Colonic mucosa (tissue), 4 donors: ENCODE measurements at regions of chrX and their contacts with region 1.

Region 1: DNA sequence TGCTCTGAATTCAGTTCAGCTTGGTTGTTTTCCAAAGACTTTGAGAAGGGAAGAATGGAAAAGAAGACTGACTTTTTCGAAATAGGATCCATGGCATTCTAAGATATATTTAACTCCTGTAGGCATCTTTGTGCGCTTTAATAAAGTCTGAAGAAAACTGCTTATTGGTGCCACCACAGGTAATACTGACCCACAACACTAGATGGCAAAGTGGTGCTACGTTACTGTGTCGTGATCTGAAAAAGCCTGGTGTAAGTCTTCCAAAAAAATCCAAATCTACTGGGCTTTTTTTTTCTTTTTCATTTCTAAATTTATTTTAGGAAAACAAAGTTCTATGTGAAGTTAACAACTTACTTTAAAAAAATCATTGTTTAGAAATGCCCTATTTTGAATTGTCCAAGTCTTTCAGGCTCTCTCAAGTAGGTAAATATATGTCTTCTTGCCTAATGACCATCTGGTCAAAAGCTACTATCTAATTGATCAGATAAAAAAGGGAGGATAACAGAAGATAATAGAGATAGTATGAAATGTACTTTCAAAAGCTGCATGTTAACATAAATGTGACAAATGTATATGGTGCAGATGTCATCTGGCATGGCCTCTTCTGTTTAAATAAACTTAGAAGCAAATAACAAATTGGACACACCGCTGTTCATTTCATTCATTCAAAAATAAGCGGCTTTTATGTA is 47.0 kb upstream of the MID1IP1 start:
- DNase-seq: peak; percentile 22
- H3K4me3 ChIP-seq: no peak overlapping the region
- H3K27ac ChIP-seq: no peak overlapping the region
- H3K4me1 ChIP-seq: no peaks in the 10 kb centered on the region
- H3K27me3 ChIP-seq: no peaks in the 10 kb centered on the region
- CTCF ChIP-seq: peak; percentile 46

Region 2: GRCh38 chrX:39242187-39242586 is 487.9 kb after region 1 on chrX:
- intact Hi-C with region 1: loop called (anchors 10 kb)
- DNase-seq: peak; percentile 64
- H3K4me3 ChIP-seq: no peak overlapping the region
- H3K27ac ChIP-seq: no peak overlapping the region
- H3K4me1 ChIP-seq: no peaks in the 10 kb centered on the region
- H3K27me3 ChIP-seq: no peaks in the 10 kb centered on the region
- CTCF ChIP-seq: peak; percentile 45